Psoas muscle (tissue), 8 donors: ENCODE measurements at regions of chr14 and their contacts with region 1.

Region 1: DNA sequence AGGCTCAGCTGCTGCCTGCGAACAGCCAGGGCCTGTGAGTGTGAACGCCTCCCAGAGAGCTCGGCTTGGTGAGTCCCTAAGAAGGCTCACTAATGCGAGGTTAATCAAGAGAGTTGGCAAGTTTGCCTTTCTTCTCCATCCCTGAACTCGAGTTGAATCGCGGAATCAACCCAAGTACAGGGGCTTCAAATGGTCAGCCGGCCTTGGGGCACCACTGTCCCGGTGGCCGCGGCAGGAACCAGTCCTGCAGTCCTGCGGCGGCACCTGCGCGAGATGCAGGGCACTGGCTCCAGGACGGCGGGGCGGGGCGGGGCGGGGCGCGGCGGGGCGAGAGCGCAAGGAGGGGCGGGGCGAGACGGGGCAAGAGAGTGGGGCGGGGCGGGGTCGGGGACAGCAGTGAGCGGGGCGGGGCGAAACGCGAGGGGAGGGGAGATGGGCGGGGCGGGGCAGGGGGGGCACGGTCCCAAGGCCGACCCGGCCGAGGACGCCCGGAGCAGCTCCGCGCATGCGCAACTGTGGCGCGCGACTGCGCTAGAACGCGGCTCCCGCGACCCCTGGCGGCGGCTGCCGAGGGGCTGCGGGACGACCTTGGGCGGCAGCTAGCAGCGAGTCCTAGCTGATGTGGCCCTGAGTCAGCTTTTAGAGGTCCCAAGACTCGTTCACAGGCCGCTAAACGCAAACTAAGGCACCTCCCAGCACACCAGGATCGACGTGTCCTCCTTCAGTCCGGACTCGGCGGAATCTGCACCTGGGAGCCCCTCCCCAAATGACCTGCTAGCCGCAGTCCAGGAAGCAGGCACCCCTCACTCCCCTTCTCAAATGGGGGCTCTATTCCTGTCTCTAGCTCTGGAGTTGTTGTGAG is 58.0 kb downstream of the TTC7B start:
- DNase-seq: peak; percentile 93 to 97
- ATAC-seq: peak; percentile 79 to 86 (median 81)
- H3K4me3 ChIP-seq: peak overlapping the region; percentile 67
- H3K27ac ChIP-seq: peak overlapping the region; percentile 98
- H3K4me1 ChIP-seq: peaks cover 26% of the 10 kb centered on the region
- H3K27me3 ChIP-seq: no peaks in the 10 kb centered on the region
- CTCF ChIP-seq: peak; percentile 89

Region 2: GRCh38 chr14:90301668-90302090 is 456.6 kb before region 1 on chr14:
- intact Hi-C with region 1: loop called (anchors 2 to 5 kb)
- DNase-seq: no peak
- ATAC-seq: peak; percentile 43 to 73 (median 64)
- H3K4me3 ChIP-seq: no peak overlapping the region
- H3K27ac ChIP-seq: peak overlapping the region; percentile 74
- H3K4me1 ChIP-seq: peaks cover 34% of the 10 kb centered on the region
- H3K27me3 ChIP-seq: no peaks in the 10 kb centered on the region
- CTCF ChIP-seq: peak; percentile 66

Region 3: GRCh38 chr14:90383075-90383730 is 375.1 kb before region 1 on chr14:
- intact Hi-C with region 1: loop called (anchors 1 to 5 kb)
- DNase-seq: peak; percentile 100
- ATAC-seq: peak; percentile 85 to 92 (median 90)
- H3K4me3 ChIP-seq: peak overlapping the region; percentile 76
- H3K27ac ChIP-seq: peak overlapping the region; percentile 100
- H3K4me1 ChIP-seq: peaks cover 30% of the 10 kb centered on the region
- H3K27me3 ChIP-seq: no peaks in the 10 kb centered on the region
- CTCF ChIP-seq: no peak

Region 4: GRCh38 chr14:90399541-90400444 is 358.5 kb before region 1 on chr14:
- intact Hi-C with region 1: loop called (anchors 5 kb)
- DNase-seq: peak; percentile 88 to 94
- ATAC-seq: peak; percentile 73 to 80 (median 76)
- H3K4me3 ChIP-seq: peak overlapping the region; percentile 87
- H3K27ac ChIP-seq: peak overlapping the region; percentile 92
- H3K4me1 ChIP-seq: peaks cover 52% of the 10 kb centered on the region
- H3K27me3 ChIP-seq: no peaks in the 10 kb centered on the region
- CTCF ChIP-seq: peak; percentile 98

Region 5: GRCh38 chr14:90624728-90625400 is 133.4 kb before region 1 on chr14:
- intact Hi-C with region 1: loop called in 1 of 2 experiments (anchors 5 kb)
- DNase-seq: no peak
- ATAC-seq: peak; percentile 57 to 67 (median 64)
- H3K4me3 ChIP-seq: peak overlapping the region; percentile 26
- H3K27ac ChIP-seq: peak overlapping the region; percentile 94
- H3K4me1 ChIP-seq: peaks cover 55% of the 10 kb centered on the region
- H3K27me3 ChIP-seq: no peaks in the 10 kb centered on the region
- CTCF ChIP-seq: no peak

Region 6: DNA sequence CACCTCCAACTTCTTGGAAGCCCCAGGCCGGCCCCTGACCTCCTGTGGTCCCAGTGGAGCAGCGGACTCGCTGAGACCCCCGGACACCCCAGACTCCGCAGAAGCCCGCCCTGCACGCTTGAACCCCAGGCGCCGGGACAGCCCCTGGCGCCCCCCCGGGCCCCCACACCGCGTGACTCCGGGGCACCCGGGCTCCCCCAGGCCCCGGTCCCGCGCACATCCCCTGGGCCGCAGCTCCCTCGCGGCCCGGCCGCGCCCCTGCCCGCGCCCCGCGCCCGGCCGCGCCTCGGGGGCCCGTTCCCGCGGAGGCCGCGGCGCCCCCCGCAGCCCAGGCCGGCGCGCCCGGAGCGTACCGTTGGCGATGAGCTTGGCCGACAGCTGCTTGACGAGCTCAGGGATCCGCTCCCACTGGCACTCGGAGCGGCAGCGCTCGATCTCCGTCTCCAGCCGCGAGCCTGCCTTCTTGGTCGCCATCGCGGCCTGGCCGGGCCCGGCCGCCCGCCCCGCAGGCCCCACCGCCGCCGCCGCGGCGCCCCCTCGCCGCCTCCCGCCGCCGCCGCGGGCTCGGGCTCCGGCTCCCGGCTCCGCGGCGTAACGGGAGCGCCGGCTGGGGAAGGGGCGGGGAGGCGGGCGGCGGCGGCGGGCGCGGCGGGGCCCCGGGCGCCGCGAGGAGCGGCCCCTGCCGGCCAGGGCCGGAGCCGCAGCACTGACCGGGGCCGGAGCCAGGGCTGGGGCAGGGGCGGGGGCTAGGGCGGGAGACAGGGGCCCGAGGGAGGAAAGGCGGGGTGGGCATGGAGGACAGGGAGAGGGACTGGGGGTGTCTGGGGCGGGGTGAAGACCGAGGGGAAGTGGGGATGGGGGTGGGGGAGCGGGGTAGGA is 57.8 kb after region 1 on chr14 and contains the start of gene TTC7B:
- intact Hi-C with region 1: loop called in 1 of 2 experiments (anchors 5 kb)
- DNase-seq: peak; percentile 57 to 78
- ATAC-seq: peak; percentile 83 to 91 (median 87)
- H3K4me3 ChIP-seq: peak within 1 kb of the TSS; percentile 85
- H3K27ac ChIP-seq: peak within 1 kb of the TSS; percentile 63
- H3K4me1 ChIP-seq: peaks cover 10% of the 10 kb centered on the region
- H3K27me3 ChIP-seq: no peaks in the 10 kb centered on the region
- CTCF ChIP-seq: peak; percentile 35
- total RNA-seq, gene TTC7B: 59.0 to 97.0 (median 75.3) TPM